Activated B cell treated with CpG ODN at 0.5 μM for 24 hours (primary cell): ENCODE measurements at regions of chr11 and their contacts with region 1.

Region 1: GRCh38 chr11:14480716-14481115 is 18.9 kb downstream of the COPB1 start:
- DNase-seq: no peak
- ATAC-seq: no peak
- H3K4me3 Mint-ChIP-seq: no peak overlapping the region
- H3K27ac Mint-ChIP-seq: no peak overlapping the region
- H3K4me1 Mint-ChIP-seq: no peaks in the 10 kb centered on the region
- H3K27me3 Mint-ChIP-seq: no peaks in the 10 kb centered on the region
- CTCF ChIP-seq: no peak

Region 2: GRCh38 chr11:14463623-14464022 is 17.1 kb before region 1 on chr11:
- CTCF ChIA-PET with region 1: no interaction called
- POLR2A ChIA-PET with region 1: no interaction called
- intact Hi-C with region 1: no loop called
- DNase-seq: no peak
- ATAC-seq: no peak
- H3K4me3 Mint-ChIP-seq: no peak overlapping the region
- H3K27ac Mint-ChIP-seq: no peak overlapping the region
- H3K4me1 Mint-ChIP-seq: no peaks in the 10 kb centered on the region
- H3K27me3 Mint-ChIP-seq: no peaks in the 10 kb centered on the region
- CTCF ChIP-seq: no peak

Region 3: DNA sequence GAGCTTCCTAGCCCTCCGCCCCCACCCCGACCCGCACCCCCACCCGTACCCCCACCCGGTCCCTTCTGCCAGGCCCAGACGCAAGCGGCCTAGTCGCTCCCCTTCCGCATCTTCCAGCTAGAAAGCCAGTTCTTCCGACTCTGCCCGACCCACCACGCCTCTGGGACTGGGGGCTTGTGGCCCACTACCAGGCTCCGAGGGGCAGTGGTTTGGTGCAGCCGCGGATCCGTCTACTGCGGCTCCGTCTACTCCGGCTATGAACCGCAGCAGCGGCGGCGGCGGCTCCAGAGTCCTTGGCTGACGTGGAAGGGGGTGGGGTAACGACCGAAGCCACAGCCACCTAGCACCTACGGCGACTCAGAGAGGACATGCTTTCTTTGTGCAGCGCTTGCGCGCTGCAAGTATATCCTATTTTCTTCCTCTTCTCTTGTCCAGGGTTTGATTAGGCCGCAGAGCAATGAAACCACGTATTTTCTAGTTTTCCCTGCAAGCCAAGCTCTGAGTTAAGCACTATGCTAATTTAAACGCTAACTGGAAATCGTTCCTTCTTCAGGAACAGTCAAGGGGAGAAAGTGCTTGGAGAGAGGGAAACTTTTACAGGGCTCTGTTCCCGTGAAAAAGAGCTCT is 19.0 kb after region 1 on chr11 and contains the start of gene COPB1:
- CTCF ChIA-PET with region 1: no interaction called
- POLR2A ChIA-PET with region 1: interaction called, 5 read pairs
- intact Hi-C with region 1: loop called (anchors 2 kb)
- DNase-seq: peak; percentile 81
- ATAC-seq: peak; percentile 95
- H3K4me3 Mint-ChIP-seq: peak within 1 kb of the TSS; percentile 100
- H3K27ac Mint-ChIP-seq: peak within 1 kb of the TSS; percentile 96
- H3K4me1 Mint-ChIP-seq: peaks cover 41% of the 10 kb centered on the region
- H3K27me3 Mint-ChIP-seq: no peaks in the 10 kb centered on the region
- CTCF ChIP-seq: no peak
- total RNA-seq, gene COPB1: 80.7 and 90.1 TPM in 2 replicates